Heart left ventricle (tissue), 16 donors: ENCODE measurements at regions of chr19 and their contacts with region 1.

Region 1: DNA sequence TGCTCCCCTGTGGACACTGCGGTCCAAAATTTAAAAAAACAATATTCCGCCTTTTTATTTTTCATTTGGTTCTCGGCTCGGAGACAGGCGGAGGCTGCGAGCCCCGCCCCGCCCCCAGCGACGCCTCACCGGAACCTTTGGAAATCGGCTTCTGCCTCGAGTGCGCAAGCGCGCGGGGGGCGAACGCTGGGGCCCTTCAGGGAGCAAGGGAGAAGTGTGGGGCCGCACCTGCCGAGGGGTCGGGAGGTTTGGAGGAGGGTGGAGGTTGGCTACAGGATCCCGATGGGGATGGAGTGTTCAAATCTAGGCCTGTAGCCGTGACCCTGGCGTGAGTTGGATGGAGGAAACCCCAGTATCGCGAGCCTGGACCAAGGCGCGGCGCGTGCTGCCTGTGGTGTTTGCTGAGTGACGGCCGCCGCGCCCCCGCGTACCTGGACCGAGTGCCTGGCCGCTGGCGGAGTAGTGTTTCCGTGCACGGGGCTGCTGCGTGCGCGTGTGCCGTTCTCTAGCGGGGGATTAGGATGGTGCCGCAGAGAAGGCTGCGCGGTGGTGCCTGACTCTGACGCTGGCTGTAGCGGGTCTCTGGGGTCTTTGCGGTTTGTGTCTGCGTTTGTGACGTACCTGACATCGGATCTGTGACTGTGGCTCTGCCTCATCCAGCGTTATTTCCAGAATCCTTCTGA is 565 bp upstream of the ZFP30 start:
- DNase-seq: peak; percentile 87 to 92 (median 88)
- ATAC-seq: peak; percentile 73 to 89 (median 88)
- H3K4me3 ChIP-seq: peak overlapping the region; percentile 67 to 90 (median 77)
- H3K27ac ChIP-seq: peak overlapping the region; percentile 80 to 95 (median 91)
- H3K4me1 ChIP-seq: peaks cover 5 to 27% (median 14%) of the 10 kb centered on the region in 12 donors
- H3K27me3 ChIP-seq: no peaks in the 10 kb centered on the region
- CTCF ChIP-seq: no peak
- POLR2A ChIP-seq: peak in 1 of 2 donors; percentile 24

Region 2: DNA sequence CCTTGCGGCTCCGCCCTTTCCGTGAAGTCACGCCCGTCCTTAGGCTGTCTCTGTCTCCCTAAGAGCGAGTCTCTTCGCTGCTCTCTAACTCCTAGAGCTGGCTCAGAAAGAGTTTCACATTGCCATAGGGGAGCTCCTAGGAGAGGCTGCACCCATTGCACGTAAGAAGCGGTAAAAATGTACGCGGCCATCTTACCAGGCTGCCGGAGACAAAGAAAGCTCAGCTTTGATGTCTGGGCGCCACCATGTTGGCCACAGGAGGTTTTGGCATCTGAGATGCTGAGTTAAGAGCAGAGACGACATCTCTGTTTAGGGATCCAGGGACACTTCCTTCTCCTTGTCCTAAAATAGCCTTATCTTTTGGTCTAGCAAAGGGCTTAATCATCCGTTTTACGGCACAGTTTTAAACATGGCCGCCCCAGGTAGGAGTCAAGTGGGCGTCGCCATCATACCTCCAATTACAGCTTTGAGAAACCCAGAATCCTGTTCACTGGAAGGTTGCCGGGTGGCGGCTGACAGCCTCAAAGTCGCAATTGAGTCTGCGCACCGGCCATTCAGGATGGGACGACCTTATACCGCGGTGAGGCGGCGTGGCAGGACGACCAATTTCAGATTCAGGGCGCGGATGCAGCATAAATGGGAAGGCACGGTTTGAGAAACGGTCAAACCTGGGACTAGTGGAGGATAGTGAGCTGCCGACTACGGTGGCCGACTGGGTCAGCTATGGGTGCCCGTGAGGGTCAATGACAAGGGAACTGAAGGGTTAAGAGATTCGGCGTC is 149.3 kb before region 1 on chr19 and contains the start of gene ZNF793:
- intact Hi-C with region 1: loop called in 1 of 10 experiments (anchors 10 kb)
- DNase-seq: peak; percentile 84 to 87 (median 86)
- ATAC-seq: peak; percentile 92 to 94 (median 94)
- H3K4me3 ChIP-seq: peak within 1 kb of the TSS; percentile 62 to 87 (median 70)
- H3K27ac ChIP-seq: peak within 1 kb of the TSS; percentile 86 to 98 (median 93)
- H3K4me1 ChIP-seq: peaks cover 0 to 19% (median 5%) of the 10 kb centered on the region in 12 donors
- H3K27me3 ChIP-seq: no peaks in the 10 kb centered on the region
- CTCF ChIP-seq: no peak
- POLR2A ChIP-seq: peak in 1 of 2 donors; percentile 13
- total RNA-seq, gene ZNF793: 2.8 to 7.9 (median 6.2) TPM

Region 3: GRCh38 chr19:37594304-37594981 is 61.4 kb before region 1 on chr19 and contains the starts of genes ZNF540 and ZNF571:
- intact Hi-C with region 1: loop called in 3 of 10 experiments (anchors 5 to 10 kb)
- DNase-seq: peak; percentile 93 to 96 (median 95)
- ATAC-seq: peak; percentile 99 to 100 (median 99)
- H3K4me3 ChIP-seq: peak within 1 kb of the TSS; percentile 34 to 94 (median 79)
- H3K27ac ChIP-seq: peak within 1 kb of the TSS; percentile 74 to 92 (median 90)
- H3K4me1 ChIP-seq: peaks cover 0 to 24% (median 17%) of the 10 kb centered on the region in 12 donors
- H3K27me3 ChIP-seq: no peaks in the 10 kb centered on the region
- CTCF ChIP-seq: no peak
- POLR2A ChIP-seq: peak; percentile 47 to 76
- total RNA-seq, gene ZNF540: 1.4 to 8.2 (median 5.0) TPM
- total RNA-seq, gene ZNF571: 2.1 to 3.3 (median 2.7) TPM

Region 4: GRCh38 chr19:37691881-37692504 is 36.2 kb after region 1 on chr19:
- intact Hi-C with region 1: loop called in 2 of 10 experiments (anchors 2 to 5 kb)
- DNase-seq: peak; percentile 87 to 93 (median 91)
- ATAC-seq: peak; percentile 93 to 98 (median 98)
- H3K4me3 ChIP-seq: peak overlapping the region; percentile 53 to 84 (median 69)
- H3K27ac ChIP-seq: peak overlapping the region; percentile 27 to 93 (median 82)
- H3K4me1 ChIP-seq: peaks cover 0 to 16% (median 8%) of the 10 kb centered on the region in 12 donors
- H3K27me3 ChIP-seq: no peaks in the 10 kb centered on the region
- CTCF ChIP-seq: peak in 5 of 12 donors; percentile 18 to 37 (median 32)
- POLR2A ChIP-seq: peak in 1 of 2 donors; percentile 64

Region 5: DNA sequence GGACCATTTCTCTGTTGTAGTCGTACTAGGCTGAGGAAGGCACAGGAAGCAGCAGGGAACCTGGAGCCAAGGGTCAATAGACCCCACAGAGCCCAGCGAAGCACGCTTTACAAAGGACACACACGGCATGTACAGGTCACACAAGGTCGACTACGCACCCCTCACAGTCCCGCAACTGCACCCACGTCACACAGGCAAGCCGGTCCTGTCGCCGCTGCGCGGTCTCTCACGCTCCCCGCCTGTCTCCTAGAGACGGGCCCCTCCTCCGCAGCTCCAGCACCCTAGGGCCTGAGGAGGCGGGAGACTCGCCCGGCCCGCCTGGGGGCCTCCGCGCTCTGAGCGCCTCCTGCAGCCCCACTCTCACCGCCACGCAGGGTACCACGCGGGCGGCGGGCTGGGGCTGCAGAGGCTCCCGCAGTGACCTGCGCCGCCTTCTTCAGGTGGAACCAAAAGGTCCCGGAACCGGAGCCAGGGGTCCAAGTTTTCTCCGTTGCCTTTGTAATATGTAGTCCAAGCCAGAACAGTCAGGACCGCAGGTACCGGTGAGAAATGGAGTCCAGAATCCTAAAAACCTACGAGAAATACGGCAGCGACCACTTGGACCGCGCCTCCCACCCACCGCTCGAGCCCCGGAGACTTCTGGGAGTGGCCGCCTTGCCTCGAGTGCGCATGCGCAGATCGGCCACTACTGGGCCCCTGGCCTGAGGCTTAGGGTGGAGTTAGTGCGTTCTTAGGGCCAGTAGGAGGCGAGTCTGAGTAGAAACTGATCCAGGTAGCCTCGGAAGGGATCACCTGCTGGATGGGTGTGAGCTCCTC is 63.5 kb after region 1 on chr19 and contains the start of gene ZNF607:
- intact Hi-C with region 1: loop called in 3 of 10 experiments (anchors 2 to 10 kb)
- DNase-seq: peak; percentile 91 to 96 (median 94)
- ATAC-seq: peak; percentile 99
- H3K4me3 ChIP-seq: peak within 1 kb of the TSS; percentile 70 to 100 (median 86)
- H3K27ac ChIP-seq: peak within 1 kb of the TSS in 11 of 12 donors; percentile 74 to 91 (median 86)
- H3K4me1 ChIP-seq: peaks cover 0 to 16% (median 10%) of the 10 kb centered on the region in 12 donors
- H3K27me3 ChIP-seq: no peaks in the 10 kb centered on the region
- CTCF ChIP-seq: peak; percentile 43 to 82 (median 68)
- POLR2A ChIP-seq: peak in 1 of 2 donors; percentile 46
- total RNA-seq, gene ZNF607: 4.5 to 7.9 (median 6.0) TPM